ENCODE measurements at regions of chr17 and their contacts with region 1.

Region 1: GRCh38 chr17:13594762-13595598 is 6.7 kb downstream of the HS3ST3A1 start:
- DNase-seq: peak; percentile 44 to 85 (median 80)
- ATAC-seq: peak; percentile 91
- H3K4me3 ChIP-seq: no peak overlapping the region
- H3K4me3 Mint-ChIP-seq: no peak overlapping the region
- H3K27ac ChIP-seq: no peak overlapping the region
- H3K27ac Mint-ChIP-seq: peak overlapping the region in 1 of 9 donors; percentile 3
- H3K4me1 ChIP-seq: no peaks in the 10 kb centered on the region
- H3K4me1 Mint-ChIP-seq: peaks cover 1 to 8% (median 7%) of the 10 kb centered on the region in 7 donors
- H3K27me3 ChIP-seq: no peaks in the 10 kb centered on the region
- H3K27me3 Mint-ChIP-seq: peaks cover 29 to 39% (median 36%) of the 10 kb centered on the region in 5 donors

Region 2: DNA sequence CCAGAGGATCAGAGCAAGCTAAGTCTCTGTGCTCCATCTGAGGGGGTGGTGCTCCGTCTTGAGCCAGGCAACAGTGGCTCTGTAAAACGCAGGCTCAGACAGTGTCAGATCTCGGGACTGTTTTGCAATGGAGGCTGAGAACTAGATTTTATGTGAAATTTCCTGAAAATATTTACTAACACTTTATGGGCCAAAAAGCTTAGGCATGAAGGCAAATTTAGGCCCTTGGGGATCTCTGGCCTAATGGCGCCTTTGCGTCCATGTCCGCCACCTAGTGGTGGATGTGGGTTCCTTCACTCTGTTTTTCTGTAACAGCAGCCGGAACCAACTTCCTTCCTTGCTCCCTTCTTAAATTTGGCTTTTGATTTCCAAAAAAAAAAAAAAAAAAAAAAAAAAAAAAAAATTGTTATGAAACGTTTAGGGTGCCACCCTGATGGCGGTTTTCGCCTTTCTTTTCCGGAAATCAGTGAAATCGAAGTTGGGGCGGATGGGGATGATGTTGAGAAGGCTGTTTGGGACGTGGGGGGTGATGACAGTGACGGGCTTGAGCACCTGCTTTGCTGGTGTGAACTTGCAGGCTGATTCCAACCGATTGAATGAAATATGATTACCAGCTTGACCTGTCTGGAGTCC is 563.1 kb before region 1 on chr17:
- CTCF ChIA-PET with region 1: no interaction called
- POLR2A ChIA-PET with region 1: no interaction called
- intact Hi-C with region 1: loop called in 1 of 2 experiments (anchors 2 kb)
- DNase-seq: peak in 8 of 9 donors; percentile 34 to 63 (median 54)
- ATAC-seq: peak; percentile 77
- H3K4me3 ChIP-seq: no peak overlapping the region
- H3K4me3 Mint-ChIP-seq: peak overlapping the region in 8 of 10 donors; percentile 18 to 71 (median 42)
- H3K27ac ChIP-seq: no peak overlapping the region
- H3K27ac Mint-ChIP-seq: peak overlapping the region in 8 of 9 donors; percentile 41 to 90 (median 76)
- H3K4me1 ChIP-seq: peaks cover 0 to 12% of the 10 kb centered on the region in 2 donors
- H3K4me1 Mint-ChIP-seq: peaks cover 6 to 29% (median 16%) of the 10 kb centered on the region in 7 donors
- H3K27me3 ChIP-seq: peaks cover 0 to 2% of the 10 kb centered on the region in 2 donors
- H3K27me3 Mint-ChIP-seq: peaks cover 0 to 16% (median 6%) of the 10 kb centered on the region in 5 donors

Region 3: DNA sequence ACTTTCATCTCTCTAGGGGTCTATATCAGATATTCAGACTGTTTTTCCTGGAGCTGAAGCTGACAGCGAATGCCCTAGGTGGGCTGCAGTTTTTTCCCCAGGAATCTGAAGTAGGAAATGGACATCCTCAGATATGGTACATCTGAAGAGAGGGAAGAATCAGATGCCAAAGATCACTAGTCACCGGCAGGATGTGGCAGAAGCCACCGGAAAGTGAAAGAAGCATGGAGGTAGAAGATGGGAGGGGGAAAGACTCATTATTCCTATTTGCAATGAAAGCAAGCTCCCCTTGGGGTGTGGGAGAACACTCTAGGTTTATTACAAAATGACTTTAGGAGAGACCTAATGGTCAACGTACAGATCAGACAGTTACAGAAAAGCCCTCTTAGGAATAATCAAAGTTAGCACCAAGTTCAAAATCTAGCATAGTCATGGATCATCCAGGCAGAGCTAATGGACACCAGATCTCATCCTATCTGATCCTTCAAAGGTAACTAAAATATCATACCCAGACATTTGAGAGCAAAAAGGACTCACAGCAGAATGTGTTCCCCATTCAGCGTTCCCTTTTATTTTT is 104.0 kb before region 1 on chr17:
- CTCF ChIA-PET with region 1: no interaction called
- POLR2A ChIA-PET with region 1: no interaction called
- intact Hi-C with region 1: no loop called
- DNase-seq: no peak
- ATAC-seq: no peak
- H3K4me3 ChIP-seq: no peak overlapping the region
- H3K4me3 Mint-ChIP-seq: peak overlapping the region in 1 of 10 donors; percentile 1
- H3K27ac ChIP-seq: no peak overlapping the region
- H3K27ac Mint-ChIP-seq: no peak overlapping the region
- H3K4me1 ChIP-seq: no peaks in the 10 kb centered on the region
- H3K4me1 Mint-ChIP-seq: peaks cover 0 to 8% (median 0%) of the 10 kb centered on the region in 7 donors
- H3K27me3 ChIP-seq: no peaks in the 10 kb centered on the region
- H3K27me3 Mint-ChIP-seq: peaks cover 4 to 14% (median 9%) of the 10 kb centered on the region in 5 donors

Region 4: DNA sequence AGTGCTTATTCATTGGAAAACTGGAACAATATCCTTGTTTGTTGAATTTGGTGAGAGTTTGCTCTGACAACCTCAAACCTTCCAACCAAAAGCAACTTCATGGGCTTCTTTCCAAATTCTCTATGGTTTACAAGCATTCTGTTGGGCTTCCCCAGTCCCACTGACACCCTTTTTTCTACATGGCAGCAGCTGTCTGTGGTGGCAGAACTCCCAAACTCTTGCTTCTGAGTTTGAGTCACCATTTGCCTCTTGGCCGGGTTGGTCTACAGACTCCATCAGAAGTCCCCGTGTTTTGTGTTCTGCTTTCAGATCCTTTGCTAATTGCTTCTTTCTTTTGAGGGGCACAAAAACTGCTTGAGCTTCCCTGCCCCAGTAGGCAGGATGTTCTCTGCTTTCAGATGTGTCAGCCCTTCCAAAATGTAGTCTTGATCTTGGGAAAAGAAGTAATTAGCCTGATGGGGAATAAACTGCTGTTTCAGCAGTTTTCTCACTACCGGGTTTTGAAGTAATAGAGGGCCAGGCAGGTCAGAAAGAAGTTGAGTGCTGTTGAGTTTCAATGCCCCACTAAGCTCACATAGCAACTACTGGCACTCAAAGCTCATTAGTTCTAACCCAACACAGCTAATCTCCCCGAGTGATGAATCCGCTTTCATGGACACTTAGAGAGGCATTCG is 73.9 kb before region 1 on chr17:
- CTCF ChIA-PET with region 1: no interaction called
- POLR2A ChIA-PET with region 1: no interaction called
- intact Hi-C with region 1: no loop called
- DNase-seq: no peak
- ATAC-seq: no peak
- H3K4me3 ChIP-seq: no peak overlapping the region
- H3K4me3 Mint-ChIP-seq: no peak overlapping the region
- H3K27ac ChIP-seq: no peak overlapping the region
- H3K27ac Mint-ChIP-seq: no peak overlapping the region
- H3K4me1 ChIP-seq: no peaks in the 10 kb centered on the region
- H3K4me1 Mint-ChIP-seq: no peaks in the 10 kb centered on the region
- H3K27me3 ChIP-seq: no peaks in the 10 kb centered on the region
- H3K27me3 Mint-ChIP-seq: peaks cover 0 to 15% (median under 1%) of the 10 kb centered on the region in 5 donors

Region 5: GRCh38 chr17:14203388-14203787 is 608.4 kb after region 1 on chr17:
- CTCF ChIA-PET with region 1: no interaction called
- POLR2A ChIA-PET with region 1: no interaction called
- intact Hi-C with region 1: loop called (anchors 5 to 10 kb)
- DNase-seq: peak in 7 of 9 donors; percentile 51 to 72 (median 64)
- ATAC-seq: peak; percentile 59
- H3K4me3 ChIP-seq: no peak overlapping the region
- H3K4me3 Mint-ChIP-seq: peak overlapping the region; percentile 18 to 72 (median 58)
- H3K27ac ChIP-seq: peak overlapping the region; percentile 45
- H3K27ac Mint-ChIP-seq: peak overlapping the region; percentile 86 to 96 (median 94)
- H3K4me1 ChIP-seq: peaks cover 80 to 81% of the 10 kb centered on the region in 2 donors
- H3K4me1 Mint-ChIP-seq: peaks cover 76 to 95% (median 84%) of the 10 kb centered on the region in 7 donors
- H3K27me3 ChIP-seq: no peaks in the 10 kb centered on the region
- H3K27me3 Mint-ChIP-seq: no peaks in the 10 kb centered on the region

Region 6: DNA sequence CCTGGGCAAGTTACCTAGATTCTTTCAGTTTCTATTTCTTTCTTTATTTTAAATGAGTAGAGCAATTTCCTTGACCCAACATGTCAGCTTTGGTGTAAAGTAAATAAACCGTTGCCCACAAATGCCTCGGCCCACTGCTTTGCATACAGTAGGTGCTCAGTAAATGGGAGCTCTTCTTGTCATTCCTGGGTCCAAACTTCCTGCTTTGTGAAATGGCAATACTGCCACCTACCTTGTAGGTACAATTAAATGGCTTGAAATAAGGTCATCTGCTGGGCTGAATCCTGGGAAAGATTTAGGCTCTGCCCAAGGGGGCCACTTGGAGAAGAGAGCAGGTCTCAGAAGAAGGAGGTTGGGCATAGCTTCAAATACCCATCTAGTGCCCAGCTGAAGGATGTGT is 958.9 kb after region 1 on chr17:
- CTCF ChIA-PET with region 1: interaction called, 3 read pairs
- POLR2A ChIA-PET with region 1: no interaction called
- intact Hi-C with region 1: loop called (anchors 1 to 10 kb)
- DNase-seq: no peak
- ATAC-seq: no peak
- H3K4me3 ChIP-seq: no peak overlapping the region
- H3K4me3 Mint-ChIP-seq: no peak overlapping the region
- H3K27ac ChIP-seq: no peak overlapping the region
- H3K27ac Mint-ChIP-seq: peak overlapping the region in 1 of 9 donors; percentile 14
- H3K4me1 ChIP-seq: no peaks in the 10 kb centered on the region
- H3K4me1 Mint-ChIP-seq: peaks cover 0 to 13% (median 6%) of the 10 kb centered on the region in 7 donors
- H3K27me3 ChIP-seq: no peaks in the 10 kb centered on the region
- H3K27me3 Mint-ChIP-seq: peaks cover 0 to 1% (median 0%) of the 10 kb centered on the region in 5 donors

Region 7: DNA sequence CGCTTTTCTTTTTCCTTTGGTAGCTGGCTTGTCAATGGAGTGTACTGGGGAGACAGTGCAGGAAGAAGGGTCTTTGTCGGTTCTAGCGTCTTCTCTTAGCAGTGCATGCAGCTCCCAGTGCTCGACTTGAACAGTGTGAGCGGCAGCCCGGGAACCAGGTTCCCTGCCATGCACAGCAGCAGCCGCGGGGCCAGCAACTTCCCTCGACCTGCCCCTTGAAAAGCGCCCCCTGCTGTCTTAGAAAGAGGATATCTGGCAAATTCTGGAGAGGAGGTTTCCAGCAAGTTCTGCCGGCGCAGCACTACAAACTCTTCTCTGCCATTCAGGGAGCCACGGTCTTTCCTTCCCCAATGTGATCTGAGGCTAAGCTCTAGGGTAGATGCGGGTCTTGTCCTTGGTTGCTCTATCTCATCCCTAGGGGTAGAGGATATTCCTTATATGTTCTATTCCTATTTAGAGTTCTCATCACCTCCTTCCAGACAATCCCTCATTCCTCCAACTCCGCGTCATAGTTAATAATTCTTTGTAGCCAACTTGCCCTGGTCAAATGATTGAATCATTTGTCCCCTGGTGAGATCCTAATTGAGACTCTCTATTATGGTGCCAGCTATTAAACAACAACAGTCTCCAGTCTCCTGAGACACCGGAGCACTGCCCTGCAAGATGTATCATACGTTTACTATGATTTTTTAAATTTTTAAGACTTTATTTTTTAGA is 1218.8 kb after region 1 on chr17:
- CTCF ChIA-PET with region 1: interaction called, 4 read pairs
- POLR2A ChIA-PET with region 1: no interaction called
- intact Hi-C with region 1: loop called in 1 of 2 experiments (anchors 1 kb)
- DNase-seq: peak in 7 of 9 donors; percentile 7 to 49 (median 30)
- ATAC-seq: no peak
- H3K4me3 ChIP-seq: no peak overlapping the region
- H3K4me3 Mint-ChIP-seq: no peak overlapping the region
- H3K27ac ChIP-seq: no peak overlapping the region
- H3K27ac Mint-ChIP-seq: no peak overlapping the region
- H3K4me1 ChIP-seq: no peaks in the 10 kb centered on the region
- H3K4me1 Mint-ChIP-seq: no peaks in the 10 kb centered on the region
- H3K27me3 ChIP-seq: no peaks in the 10 kb centered on the region
- H3K27me3 Mint-ChIP-seq: peaks cover 0 to 8% (median 5%) of the 10 kb centered on the region in 5 donors

Region 8: GRCh38 chr17:15213381-15214087 is 1618.6 kb after region 1 on chr17:
- CTCF ChIA-PET with region 1: no interaction called
- POLR2A ChIA-PET with region 1: no interaction called
- intact Hi-C with region 1: loop called (anchors 5 to 10 kb)
- DNase-seq: no peak
- ATAC-seq: no peak
- H3K4me3 ChIP-seq: no peak overlapping the region
- H3K4me3 Mint-ChIP-seq: no peak overlapping the region
- H3K27ac ChIP-seq: no peak overlapping the region
- H3K27ac Mint-ChIP-seq: no peak overlapping the region
- H3K4me1 ChIP-seq: no peaks in the 10 kb centered on the region
- H3K4me1 Mint-ChIP-seq: no peaks in the 10 kb centered on the region
- H3K27me3 ChIP-seq: no peaks in the 10 kb centered on the region
- H3K27me3 Mint-ChIP-seq: peaks cover 5 to 16% (median 14%) of the 10 kb centered on the region in 5 donors